Activated T-helper 2 cell treated with anti-CD3 and anti-CD28 coated beads, Interferon-gamma antibody, Interleukin-2, Interleukin-4, amounts not matched to agents 10 μg/mL and 5 μg/mL and 100 μg/mL, durations not matched to agents 14 hours and 24 hours and 36 hours (primary cell): ENCODE measurements at regions of chr1 and their contacts with region 1.

Region 1: DNA sequence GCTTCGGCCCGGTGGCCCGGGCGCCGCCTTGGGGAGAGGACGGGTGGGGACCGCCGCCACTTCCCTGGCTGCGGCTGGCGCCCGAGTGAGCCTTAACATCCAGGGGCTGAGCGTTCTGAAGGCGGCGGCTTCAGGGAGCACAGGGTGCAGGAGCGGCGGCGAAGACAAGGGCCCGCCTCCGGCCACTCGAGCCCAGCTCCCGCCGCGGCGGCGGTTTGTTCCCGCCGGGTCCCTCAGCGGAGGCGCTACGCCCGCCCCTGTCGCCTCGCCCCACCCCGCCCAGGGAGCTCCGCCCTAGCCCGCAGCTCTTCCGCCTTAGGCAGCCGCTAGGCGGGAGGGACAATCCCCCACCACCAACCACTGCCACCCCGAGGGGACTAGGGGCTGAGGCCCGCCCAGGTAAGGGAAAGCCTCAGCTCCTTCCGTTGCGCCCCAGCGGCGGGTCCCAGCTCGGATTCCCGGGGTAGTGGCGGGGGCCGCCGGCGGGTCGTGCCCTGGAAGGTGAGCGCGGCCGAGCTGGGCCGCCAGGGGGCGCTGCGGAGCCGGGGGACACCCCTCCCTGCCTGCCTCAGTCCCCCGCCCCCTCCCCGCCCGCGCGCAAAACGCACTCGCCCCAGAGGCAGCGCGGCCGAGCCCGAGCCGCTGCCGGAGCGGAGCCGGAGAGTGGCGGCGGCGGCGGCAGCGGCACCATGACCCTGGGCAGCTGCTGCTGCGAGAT is at the start of gene FOXD2:
- DNase-seq: peak; percentile 85
- H3K4me3 Mint-ChIP-seq: peak within 1 kb of the TSS; percentile 90
- H3K27ac Mint-ChIP-seq: peak within 1 kb of the TSS; percentile 84
- H3K4me1 Mint-ChIP-seq: peaks cover 25% of the 10 kb centered on the region
- H3K27me3 Mint-ChIP-seq: peaks cover 28% of the 10 kb centered on the region
- total RNA-seq, gene FOXD2: 0.11 and 0.18 TPM in 2 replicates

Region 2: GRCh38 chr1:46489638-46490405 is 947.8 kb before region 1 on chr1 and contains the start of gene DMBX1:
- intact Hi-C with region 1: loop called (anchors 5 kb)
- DNase-seq: peak; percentile 20
- H3K4me3 Mint-ChIP-seq: peak within 1 kb of the TSS; percentile 67
- H3K27ac Mint-ChIP-seq: peak within 1 kb of the TSS; percentile 10
- H3K4me1 Mint-ChIP-seq: peaks cover 17% of the 10 kb centered on the region
- H3K27me3 Mint-ChIP-seq: peaks cover 90% of the 10 kb centered on the region
- total RNA-seq, gene DMBX1: not detected in 2 replicates

Region 3: DNA sequence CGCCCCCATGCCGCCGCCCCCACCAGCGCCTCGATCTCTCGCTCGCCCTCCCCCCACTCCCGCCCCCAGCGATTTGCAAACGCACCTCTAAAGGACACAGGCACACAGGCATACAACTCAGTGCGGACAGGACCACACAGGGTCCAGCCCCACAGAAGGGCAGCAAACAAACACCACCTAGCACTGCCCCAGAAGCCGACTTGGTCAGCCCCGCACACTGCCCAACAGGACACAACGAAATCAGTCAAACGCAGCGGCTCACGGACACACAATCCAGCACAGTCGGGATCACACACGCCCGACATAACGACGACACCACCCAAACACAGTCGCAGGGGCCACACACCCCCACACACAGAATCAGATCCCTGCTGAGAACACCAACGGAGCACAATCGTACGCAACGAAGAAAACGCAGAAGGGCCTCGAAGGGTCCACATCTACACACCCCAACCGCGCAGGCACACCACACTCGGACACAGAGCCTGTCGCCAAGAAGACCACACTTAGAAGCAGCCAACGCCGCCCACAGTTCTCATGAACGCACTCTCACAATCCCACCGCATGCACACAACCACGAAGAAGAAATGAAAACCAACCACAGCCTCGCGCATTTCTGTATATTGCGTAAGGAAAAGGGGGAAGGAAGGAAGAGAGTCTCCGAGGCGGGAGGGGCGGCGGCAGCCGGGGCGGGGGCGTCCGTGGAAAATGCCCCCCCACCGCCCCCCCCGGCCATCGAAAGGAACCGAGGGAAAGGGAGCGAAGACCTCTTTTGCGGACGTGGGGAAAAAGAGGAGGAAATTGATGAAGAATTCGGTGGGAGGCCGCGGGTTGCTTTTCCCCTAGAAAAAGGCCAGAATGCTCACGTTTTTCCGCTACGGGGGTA is 206.1 kb before region 1 on chr1:
- intact Hi-C with region 1: loop called (anchors 2 kb)
- DNase-seq: peak; percentile 27
- H3K4me3 Mint-ChIP-seq: peak overlapping the region; percentile 81
- H3K27ac Mint-ChIP-seq: peak overlapping the region; percentile 29
- H3K4me1 Mint-ChIP-seq: peaks cover 29% of the 10 kb centered on the region
- H3K27me3 Mint-ChIP-seq: peaks cover 82% of the 10 kb centered on the region

Region 4: GRCh38 chr1:47333922-47334764 is 103.5 kb before region 1 on chr1:
- intact Hi-C with region 1: loop called (anchors 1 kb)
- DNase-seq: peak; percentile 75
- H3K4me3 Mint-ChIP-seq: peak overlapping the region; percentile 95
- H3K27ac Mint-ChIP-seq: peak overlapping the region; percentile 98
- H3K4me1 Mint-ChIP-seq: peaks cover 11% of the 10 kb centered on the region
- H3K27me3 Mint-ChIP-seq: no peaks in the 10 kb centered on the region

Region 5: DNA sequence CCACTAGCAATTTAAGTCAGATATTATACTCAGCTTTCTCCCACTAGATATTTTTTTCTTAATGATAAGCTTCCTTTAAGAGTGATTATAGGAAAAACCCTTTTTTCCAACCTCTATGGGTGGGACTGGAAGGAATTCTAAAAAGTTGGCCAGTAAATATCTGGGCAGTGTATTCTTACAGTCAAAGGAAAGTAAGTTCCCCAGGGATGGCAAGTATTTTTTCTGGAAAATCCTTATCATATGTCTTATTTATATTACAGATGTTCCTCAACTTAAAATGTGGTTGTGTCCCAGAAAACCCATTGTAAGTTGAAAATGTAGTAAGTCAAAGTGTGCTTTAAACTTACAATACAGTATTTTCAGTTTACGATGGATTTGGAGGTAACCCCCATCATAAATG is 74.8 kb before region 1 on chr1:
- intact Hi-C with region 1: no loop called
- DNase-seq: no peak
- H3K4me3 Mint-ChIP-seq: no peak overlapping the region
- H3K27ac Mint-ChIP-seq: no peak overlapping the region
- H3K4me1 Mint-ChIP-seq: peaks cover 2% of the 10 kb centered on the region
- H3K27me3 Mint-ChIP-seq: no peaks in the 10 kb centered on the region

Region 6: GRCh38 chr1:47487850-47488450 is 50.3 kb after region 1 on chr1:
- intact Hi-C with region 1: no loop called
- DNase-seq: no peak
- H3K4me3 Mint-ChIP-seq: no peak overlapping the region
- H3K27ac Mint-ChIP-seq: no peak overlapping the region
- H3K4me1 Mint-ChIP-seq: no peaks in the 10 kb centered on the region
- H3K27me3 Mint-ChIP-seq: peaks cover 2% of the 10 kb centered on the region

Region 7: GRCh38 chr1:47532921-47533792 is 95.6 kb after region 1 on chr1:
- intact Hi-C with region 1: loop called (anchors 5 kb)
- DNase-seq: no peak
- H3K4me3 Mint-ChIP-seq: peak overlapping the region; percentile 10
- H3K27ac Mint-ChIP-seq: no peak overlapping the region
- H3K4me1 Mint-ChIP-seq: peaks cover 1% of the 10 kb centered on the region
- H3K27me3 Mint-ChIP-seq: peaks cover 51% of the 10 kb centered on the region